ENCODE measurements at regions of chr9 and their contacts with region 1.

Region 1: DNA sequence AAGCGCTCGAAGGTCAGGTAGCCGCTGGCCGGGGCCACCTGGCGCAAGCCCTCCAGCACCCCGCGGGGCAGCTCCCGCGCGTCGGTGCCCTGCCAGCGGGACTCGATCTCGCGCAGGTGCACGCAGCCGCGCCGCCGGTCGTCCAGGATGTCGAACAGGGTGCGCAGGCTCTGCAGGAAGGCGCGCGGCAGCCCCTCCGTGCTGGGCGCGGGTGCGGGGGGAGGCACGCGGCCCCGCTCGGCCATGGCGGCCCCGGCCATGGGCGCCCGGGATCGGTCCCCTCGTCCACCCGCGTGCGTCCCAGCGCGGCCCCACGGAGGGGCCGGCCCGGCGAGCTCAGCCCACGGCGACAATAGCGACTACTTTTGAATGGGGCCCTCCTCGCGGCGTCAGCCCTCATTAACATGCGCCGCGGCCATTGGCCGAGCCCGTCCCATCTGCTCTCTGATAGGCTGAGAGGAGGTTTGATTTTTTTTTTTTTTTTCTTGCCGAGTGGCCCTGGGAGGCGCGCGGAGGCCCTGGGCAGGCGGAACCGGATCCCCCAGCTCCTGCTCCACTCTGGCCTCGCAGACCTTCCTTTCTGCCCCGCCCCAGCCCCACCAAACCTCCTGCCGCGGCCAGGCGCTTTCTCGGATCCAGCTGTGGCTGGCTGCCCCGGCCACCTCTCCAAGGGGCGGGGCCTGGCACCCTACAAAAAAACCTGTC is at the start of gene SAPCD2:
- DNase-seq: peak; percentile 90
- H3K4me3 Mint-ChIP-seq: peak within 1 kb of the TSS; percentile 61
- H3K27ac Mint-ChIP-seq: no peak within 1 kb of the TSS
- H3K4me1 Mint-ChIP-seq: peaks cover 8% of the 10 kb centered on the region
- H3K27me3 Mint-ChIP-seq: no peaks in the 10 kb centered on the region
- total RNA-seq, gene SAPCD2: 6.4 to 6.6 TPM

Region 2: DNA sequence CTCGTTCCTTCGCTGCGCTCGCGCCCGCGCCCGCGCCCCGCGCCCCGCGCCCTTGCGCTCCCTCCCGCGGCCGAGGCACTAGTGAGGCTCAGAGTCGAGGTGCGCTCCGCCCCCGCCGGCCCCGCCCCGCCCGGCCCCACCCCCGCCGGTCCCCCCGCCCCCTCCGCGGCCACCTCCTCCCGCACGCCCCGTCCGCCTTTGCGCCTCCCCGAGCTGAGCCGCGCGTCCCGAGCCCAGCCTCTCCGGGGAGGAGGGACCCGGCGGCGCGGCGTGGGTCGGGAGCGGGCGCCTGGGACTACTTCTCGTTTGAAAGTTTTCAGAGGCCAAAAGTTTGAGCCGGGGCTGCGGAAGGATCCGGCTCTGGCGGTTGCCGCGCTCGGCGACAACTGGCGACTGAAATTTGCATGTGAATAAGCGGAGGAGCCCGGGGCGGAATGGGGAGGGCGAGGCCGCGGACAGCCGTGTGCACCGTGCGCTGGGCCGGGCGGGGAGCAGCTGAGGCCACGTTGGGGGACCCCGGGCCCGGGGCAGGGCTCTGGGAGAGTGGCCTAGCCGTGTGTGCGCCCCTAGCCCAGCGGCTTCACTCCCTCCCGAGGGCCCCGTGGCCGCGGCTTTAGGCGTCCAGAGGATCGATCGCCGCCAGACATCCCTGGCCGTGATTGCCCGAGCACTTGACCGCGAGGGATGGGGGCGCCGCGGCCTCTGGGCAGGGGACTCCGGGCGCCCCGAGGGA is 524.2 kb before region 1 on chr9 and contains the start of gene NOTCH1:
- CTCF ChIA-PET with region 1: no interaction called
- POLR2A ChIA-PET with region 1: no interaction called
- intact Hi-C with region 1: loop called (anchors 5 kb)
- DNase-seq: peak; percentile 93
- H3K4me3 Mint-ChIP-seq: peak within 1 kb of the TSS; percentile 96
- H3K27ac Mint-ChIP-seq: peak within 1 kb of the TSS; percentile 94
- H3K4me1 Mint-ChIP-seq: peaks cover 45% of the 10 kb centered on the region
- H3K27me3 Mint-ChIP-seq: no peaks in the 10 kb centered on the region
- total RNA-seq, gene NOTCH1: 67.0 to 68.3 TPM

Region 3: GRCh38 chr9:136721339-136722092 is 348.8 kb before region 1 on chr9:
- CTCF ChIA-PET with region 1: no interaction called
- POLR2A ChIA-PET with region 1: no interaction called
- intact Hi-C with region 1: no loop called
- DNase-seq: peak; percentile 34
- H3K4me3 Mint-ChIP-seq: no peak overlapping the region
- H3K27ac Mint-ChIP-seq: no peak overlapping the region
- H3K4me1 Mint-ChIP-seq: peaks cover 24% of the 10 kb centered on the region
- H3K27me3 Mint-ChIP-seq: no peaks in the 10 kb centered on the region

Region 4: DNA sequence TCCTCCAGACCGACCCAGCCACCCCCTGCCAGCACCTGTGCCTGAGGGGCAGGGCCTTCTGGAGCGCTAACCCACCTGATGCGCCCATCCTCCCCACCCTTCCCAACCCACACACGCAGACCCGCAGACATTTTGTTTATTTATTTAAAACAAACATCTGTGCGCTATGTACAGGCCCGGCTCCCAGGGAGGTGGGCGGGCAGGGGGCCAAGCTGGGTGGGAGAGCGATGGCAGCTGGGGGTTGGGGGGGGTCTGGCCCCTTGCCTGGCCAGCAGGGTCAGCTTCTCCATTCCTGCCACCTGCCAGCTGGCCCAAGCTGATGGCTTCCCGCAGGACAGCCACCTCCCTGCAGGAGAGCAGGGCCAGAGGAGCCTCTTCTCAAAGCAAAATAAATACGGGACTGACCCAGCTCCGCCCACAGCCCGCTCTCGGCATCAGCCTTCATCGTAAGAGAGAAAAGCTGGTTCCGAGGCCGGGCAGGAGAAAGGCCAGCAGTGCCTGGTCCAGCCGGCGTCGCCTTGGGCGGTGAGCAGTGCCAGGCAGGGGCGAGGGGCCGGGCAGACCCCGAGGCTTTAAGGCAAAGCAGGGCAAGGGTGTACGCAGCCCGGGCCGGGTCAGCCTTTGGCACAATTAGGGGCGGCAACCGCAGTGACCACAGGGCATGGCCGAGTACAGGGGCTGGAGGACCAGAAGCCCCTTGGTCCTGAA is 63.1 kb before region 1 on chr9:
- CTCF ChIA-PET with region 1: no interaction called
- POLR2A ChIA-PET with region 1: no interaction called
- intact Hi-C with region 1: no loop called
- DNase-seq: no peak
- H3K4me3 Mint-ChIP-seq: no peak overlapping the region
- H3K27ac Mint-ChIP-seq: no peak overlapping the region
- H3K4me1 Mint-ChIP-seq: peaks cover 3% of the 10 kb centered on the region
- H3K27me3 Mint-ChIP-seq: no peaks in the 10 kb centered on the region

Region 5: DNA sequence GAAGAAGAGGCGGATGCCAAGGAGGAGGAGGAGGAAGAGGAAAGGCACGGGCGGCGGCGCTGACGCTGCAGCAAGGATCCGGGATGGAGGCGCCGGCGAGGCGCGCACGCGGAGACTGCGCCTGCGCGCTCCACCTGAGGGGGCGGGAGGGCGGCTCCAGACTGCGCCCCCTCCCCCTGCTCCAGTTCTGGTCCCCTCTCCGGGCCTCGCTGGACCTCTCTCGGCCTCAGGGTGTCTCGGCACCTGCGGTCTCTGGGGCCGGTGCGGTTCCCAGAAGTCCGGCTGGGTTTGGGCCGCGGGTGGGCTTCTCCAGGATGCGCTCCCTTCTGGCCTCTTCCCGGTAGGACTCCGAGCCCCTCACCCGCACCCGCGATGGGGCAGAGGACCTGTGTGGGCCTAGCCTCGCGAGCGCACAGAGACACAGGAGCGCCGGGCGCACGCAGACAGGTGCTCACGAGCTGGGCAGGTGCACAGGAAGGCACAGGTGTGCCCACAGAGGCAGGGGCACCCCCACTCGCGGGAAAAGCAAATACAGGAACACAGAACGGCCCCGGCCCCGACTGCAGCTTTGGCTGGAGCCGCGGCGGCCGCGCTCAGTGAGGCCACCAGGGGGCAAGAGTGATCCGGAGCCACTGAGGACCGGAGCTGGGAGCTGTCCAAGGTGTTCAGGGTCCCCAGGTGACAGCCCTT is 24.1 kb before region 1 on chr9 and contains the start of gene NPDC1:
- CTCF ChIA-PET with region 1: interaction called, 208 read pairs
- POLR2A ChIA-PET with region 1: interaction called, 3 read pairs
- intact Hi-C with region 1: loop called (anchors 2 kb)
- DNase-seq: peak; percentile 90
- H3K4me3 Mint-ChIP-seq: peak within 1 kb of the TSS; percentile 67
- H3K27ac Mint-ChIP-seq: no peak within 1 kb of the TSS
- H3K4me1 Mint-ChIP-seq: peaks cover 10% of the 10 kb centered on the region
- H3K27me3 Mint-ChIP-seq: peaks cover 34% of the 10 kb centered on the region
- total RNA-seq, gene NPDC1: 36.0 to 42.6 TPM

Region 6: GRCh38 chr9:137055385-137056364 is 14.7 kb before region 1 on chr9:
- CTCF ChIA-PET with region 1: interaction called, 208 read pairs
- POLR2A ChIA-PET with region 1: no interaction called
- intact Hi-C with region 1: no loop called
- DNase-seq: no peak
- H3K4me3 Mint-ChIP-seq: no peak overlapping the region
- H3K27ac Mint-ChIP-seq: no peak overlapping the region
- H3K4me1 Mint-ChIP-seq: no peaks in the 10 kb centered on the region
- H3K27me3 Mint-ChIP-seq: peaks cover 11% of the 10 kb centered on the region